ENCODE measurements at regions of chr18 and their contacts with region 1.

Region 1: GRCh38 chr18:22432672-22433137 is 15.0 kb upstream of the CTAGE1 start:
- DNase-seq: peak; percentile 93
- H3K4me3 ChIP-seq: no peak overlapping the region
- H3K27ac ChIP-seq: peak overlapping the region; percentile 67
- H3K4me1 ChIP-seq: peaks cover 25% of the 10 kb centered on the region
- H3K27me3 ChIP-seq: no peaks in the 10 kb centered on the region
- CTCF ChIP-seq: no peak
- POLR2A ChIP-seq: peak; percentile 46

Region 2: DNA sequence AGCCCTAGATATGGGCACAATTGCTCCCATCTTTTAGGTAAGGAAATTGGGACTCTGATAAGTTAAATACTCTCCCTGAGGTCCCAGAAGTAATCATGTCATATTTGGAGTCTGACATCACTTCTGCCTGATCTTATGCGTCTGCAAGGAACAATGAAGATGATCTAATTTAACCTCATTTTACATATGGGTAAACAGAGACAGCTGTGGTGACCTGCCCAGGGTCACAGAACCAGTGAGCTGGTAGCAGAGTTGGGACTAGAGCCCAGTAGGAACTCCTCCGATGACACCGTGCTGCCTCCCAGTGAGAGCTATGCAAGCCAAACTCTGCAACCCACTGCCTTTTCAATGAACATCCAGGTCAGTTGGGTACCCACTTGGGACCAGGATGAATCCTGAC is 32.8 kb before region 1 on chr18:
- CTCF ChIA-PET with region 1: no interaction called
- POLR2A ChIA-PET with region 1: no interaction called
- dilution Hi-C with region 1: no loop called
- intact Hi-C with region 1: loop called (anchors 5 kb)
- DNase-seq: peak; percentile 69
- H3K4me3 ChIP-seq: no peak overlapping the region
- H3K27ac ChIP-seq: peak overlapping the region; percentile 84
- H3K4me1 ChIP-seq: peaks cover 24% of the 10 kb centered on the region
- H3K27me3 ChIP-seq: no peaks in the 10 kb centered on the region
- CTCF ChIP-seq: no peak
- POLR2A ChIP-seq: no peak

Region 3: GRCh38 chr18:22410126-22410525 is 22.6 kb before region 1 on chr18:
- CTCF ChIA-PET with region 1: no interaction called
- POLR2A ChIA-PET with region 1: no interaction called
- dilution Hi-C with region 1: no loop called
- intact Hi-C with region 1: no loop called
- DNase-seq: no peak
- H3K4me3 ChIP-seq: no peak overlapping the region
- H3K27ac ChIP-seq: no peak overlapping the region
- H3K4me1 ChIP-seq: no peaks in the 10 kb centered on the region
- H3K27me3 ChIP-seq: no peaks in the 10 kb centered on the region
- CTCF ChIP-seq: no peak
- POLR2A ChIP-seq: no peak

Region 4: GRCh38 chr18:22509423-22509822 is 76.7 kb after region 1 on chr18:
- CTCF ChIA-PET with region 1: no interaction called
- POLR2A ChIA-PET with region 1: no interaction called
- dilution Hi-C with region 1: no loop called
- intact Hi-C with region 1: no loop called
- DNase-seq: no peak
- H3K4me3 ChIP-seq: no peak overlapping the region
- H3K27ac ChIP-seq: no peak overlapping the region
- H3K4me1 ChIP-seq: peaks cover 8% of the 10 kb centered on the region
- H3K27me3 ChIP-seq: no peaks in the 10 kb centered on the region
- CTCF ChIP-seq: no peak
- POLR2A ChIP-seq: no peak

Region 5: DNA sequence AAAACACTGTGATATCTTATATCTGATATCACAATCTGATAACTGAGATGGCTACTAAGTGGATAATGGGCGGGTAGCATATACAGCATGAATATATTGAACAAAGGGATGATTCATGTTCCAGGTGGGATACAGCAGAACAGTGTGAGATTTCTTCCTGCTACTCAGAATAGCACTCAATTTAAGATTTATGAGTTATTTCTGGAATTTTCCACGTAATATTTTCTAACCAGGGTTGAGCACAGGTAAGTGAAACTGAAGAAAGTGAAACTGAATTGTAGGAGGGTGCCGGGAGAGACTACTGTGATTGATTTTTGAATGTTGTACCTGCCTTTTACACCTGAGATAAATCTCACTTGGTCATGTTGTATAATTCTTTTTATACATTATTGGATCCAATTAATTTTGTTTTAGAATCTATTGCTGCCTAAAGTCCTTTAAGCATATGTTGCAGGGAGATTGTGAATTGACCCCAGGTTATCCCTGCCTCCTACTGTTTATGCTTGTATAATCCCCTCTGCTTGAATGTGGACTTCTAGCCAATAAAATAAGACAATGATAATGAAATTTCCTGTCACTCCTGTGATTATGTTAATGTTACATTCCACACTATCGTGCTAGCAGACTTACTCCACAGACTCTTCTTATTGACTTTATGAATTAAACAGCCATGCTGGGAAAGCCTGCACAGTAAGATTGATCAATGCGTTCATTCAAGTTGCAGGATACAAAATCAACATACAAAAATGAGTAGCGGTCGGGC is 432.8 kb after region 1 on chr18:
- CTCF ChIA-PET with region 1: no interaction called
- POLR2A ChIA-PET with region 1: no interaction called
- dilution Hi-C with region 1: no loop called
- intact Hi-C with region 1: no loop called
- DNase-seq: no peak
- H3K4me3 ChIP-seq: no peak overlapping the region
- H3K27ac ChIP-seq: no peak overlapping the region
- H3K4me1 ChIP-seq: no peaks in the 10 kb centered on the region
- H3K27me3 ChIP-seq: peaks cover 12 to 47% of the 10 kb centered on the region in 2 experiments
- CTCF ChIP-seq: no peak
- POLR2A ChIP-seq: no peak